Dorsolateral prefrontal cortex (tissue), 120 donors: ENCODE measurements at regions of chr7 and their contacts with region 1.

Region 1: DNA sequence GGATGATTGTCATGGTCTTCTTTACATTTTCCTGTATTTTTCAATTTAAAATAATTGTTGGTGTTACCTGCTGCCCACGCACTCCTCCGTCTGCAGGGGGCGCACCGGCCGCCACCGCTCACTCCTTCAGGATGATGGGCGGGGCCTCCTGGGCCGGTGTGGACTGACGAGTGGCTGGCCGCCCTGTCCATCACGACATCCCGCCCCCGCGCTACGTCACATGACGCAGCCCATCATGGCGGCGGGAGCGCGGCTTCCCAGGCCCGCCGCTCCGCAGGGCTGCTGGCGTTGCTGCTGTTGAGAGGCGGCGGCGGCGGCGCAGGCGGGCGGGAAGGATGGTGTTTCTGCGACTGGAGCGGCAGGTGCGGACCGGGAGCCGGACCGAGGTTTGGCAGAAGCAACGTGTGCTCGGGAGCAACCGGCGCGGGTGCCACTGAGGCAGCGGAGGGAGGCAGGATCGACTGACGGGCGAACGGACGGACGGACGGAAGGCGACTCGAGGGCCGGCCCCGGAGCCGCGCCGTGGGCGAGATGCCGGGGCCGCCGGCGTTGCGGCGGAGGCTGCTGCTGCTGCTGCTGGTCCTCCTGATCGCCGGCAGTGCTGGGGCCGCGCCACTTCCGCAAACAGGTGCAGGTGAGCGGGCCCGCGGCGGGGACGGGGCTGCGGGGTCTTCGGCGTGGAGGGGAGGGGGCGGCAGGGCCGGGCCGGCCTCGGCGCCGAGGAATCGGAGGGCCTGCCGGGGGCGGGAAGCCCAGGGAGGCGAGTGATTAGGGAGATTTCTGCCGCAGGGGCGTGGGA is at the start of gene LMTK2:
- DNase-seq: peak; percentile 95 to 97 (median 96)
- H3K4me3 ChIP-seq: peak within 1 kb of the TSS; percentile 53 to 99 (median 95)
- H3K27ac ChIP-seq: peak within 1 kb of the TSS in 57 of 59 donors; percentile 41 to 95 (median 83)
- H3K27me3 ChIP-seq: no peaks in the 10 kb centered on the region
- CTCF ChIP-seq: peak; percentile 92 to 100 (median 98)
- total RNA-seq, gene LMTK2: 47.8 to 154 (median 104) TPM

Region 2: DNA sequence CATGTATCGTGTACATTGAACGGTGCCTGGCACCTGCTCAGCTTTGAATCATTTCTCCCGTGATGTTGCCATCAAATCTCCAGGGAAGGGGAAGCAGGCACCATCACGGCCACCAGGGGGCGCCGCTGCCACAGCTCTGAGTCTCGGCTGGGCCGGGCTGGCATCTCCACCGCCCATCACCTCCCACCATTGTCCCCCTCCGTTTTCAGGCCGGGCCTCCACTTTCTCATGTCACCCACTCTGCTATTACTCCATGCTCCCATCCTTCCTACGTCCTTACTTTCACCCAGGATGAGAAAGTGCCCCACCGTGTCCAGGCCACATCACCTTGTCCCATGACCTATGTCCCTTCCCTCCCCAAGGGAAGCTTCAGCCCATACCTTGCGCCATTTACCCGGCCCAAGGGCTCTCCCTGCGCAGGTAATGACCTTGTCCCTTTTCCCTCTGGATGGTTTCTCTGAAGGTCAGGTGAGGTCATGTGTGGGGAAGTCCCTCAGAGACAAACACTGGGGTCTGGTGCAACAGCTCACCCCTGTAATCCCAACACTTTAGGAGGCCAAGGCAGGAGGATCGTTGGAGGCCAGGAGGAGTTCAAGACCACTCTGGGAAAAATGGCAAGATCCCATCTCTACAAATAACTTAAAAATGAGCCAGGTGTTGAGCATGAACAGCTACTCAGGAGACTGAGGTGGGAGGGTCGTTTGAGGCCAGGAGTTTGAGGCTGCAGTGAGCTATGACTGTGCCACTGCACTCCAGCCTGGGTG is 85.1 kb before region 1 on chr7:
- intact Hi-C with region 1: loop called (anchors 5 kb)
- DNase-seq: peak; percentile 77 to 89 (median 87)
- H3K4me3 ChIP-seq: no peak overlapping the region
- H3K27ac ChIP-seq: no peak overlapping the region
- H3K27me3 ChIP-seq: peaks cover 0 to 4% (median 0%) of the 10 kb centered on the region in 45 donors
- CTCF ChIP-seq: peak; percentile 92 to 100 (median 97)

Region 3: DNA sequence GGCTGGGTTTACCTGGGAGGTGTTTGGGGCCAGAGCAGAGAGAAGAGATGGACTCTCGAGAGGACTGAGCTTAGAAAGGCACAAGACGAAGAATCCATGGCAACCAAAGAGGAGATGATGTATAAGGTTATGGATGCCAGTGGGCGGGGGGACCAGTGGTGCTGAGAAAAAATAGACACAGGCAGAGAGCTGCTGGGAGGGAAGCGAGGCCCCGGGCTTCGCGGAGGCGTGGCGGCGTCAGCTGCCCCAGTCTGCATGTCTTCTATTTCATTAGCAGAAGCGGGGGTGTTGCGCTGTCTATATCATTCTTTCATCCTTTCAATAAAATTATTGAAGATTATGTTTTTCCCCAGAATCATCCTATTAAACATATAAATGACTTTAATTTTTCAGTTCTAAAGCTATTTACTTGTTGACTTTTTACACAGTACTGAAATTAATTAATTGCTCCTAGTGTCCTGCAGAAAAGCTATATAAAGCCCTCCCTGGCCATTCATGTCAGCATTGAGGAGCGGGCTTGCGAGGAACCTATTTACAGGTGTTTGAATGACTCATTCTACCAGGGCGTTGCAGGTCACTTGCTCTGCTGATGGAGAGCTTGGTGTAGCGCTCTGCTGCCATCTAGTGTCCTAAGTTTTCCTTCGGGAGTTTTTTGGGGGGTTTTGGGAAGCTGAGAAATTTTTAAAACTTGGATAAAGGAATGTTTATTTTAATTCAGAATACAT is 61.5 kb after region 1 on chr7:
- intact Hi-C with region 1: loop called (anchors 2 to 5 kb)
- DNase-seq: peak in 9 of 10 donors; percentile 49 to 78 (median 65)
- H3K4me3 ChIP-seq: peak overlapping the region in 16 of 59 donors; percentile 3 to 40 (median 12)
- H3K27ac ChIP-seq: peak overlapping the region in 38 of 59 donors; percentile 5 to 79 (median 52)
- H3K27me3 ChIP-seq: no peaks in the 10 kb centered on the region
- CTCF ChIP-seq: peak; percentile 60 to 95 (median 83)

Region 4: DNA sequence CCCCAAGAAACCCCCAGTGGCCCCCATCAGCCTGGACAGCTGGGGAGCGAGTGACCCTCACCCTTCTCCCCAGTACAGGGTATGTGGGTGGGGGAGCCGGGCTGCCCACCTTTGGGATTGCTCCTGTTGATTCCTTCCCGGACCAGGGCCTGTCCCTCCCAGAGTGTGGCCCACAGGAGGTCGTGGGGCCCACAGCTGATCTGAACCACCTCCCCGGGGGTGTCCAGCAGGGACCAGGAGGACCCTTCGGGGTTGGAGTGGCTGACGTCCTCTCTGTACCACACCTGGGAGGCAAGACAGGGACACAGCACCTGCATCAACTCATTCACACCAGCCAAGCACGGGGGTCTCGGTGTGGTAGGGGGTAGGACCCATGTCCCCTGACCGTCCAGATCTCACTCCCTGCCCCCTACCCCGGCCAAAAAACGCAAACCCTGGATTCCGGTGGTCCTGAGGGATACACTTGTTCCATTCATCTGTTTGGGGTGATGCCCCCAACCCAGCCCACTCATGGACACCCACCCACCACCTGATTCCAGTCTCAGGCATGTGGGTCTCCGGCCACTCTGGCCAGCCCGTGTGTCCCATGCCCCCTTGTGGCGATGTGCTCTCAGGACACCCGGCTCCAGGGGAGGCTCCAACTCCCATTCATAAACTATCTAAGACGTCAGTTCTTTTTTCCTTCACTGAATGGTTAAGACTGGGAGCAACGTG is 134.3 kb after region 1 on chr7:
- intact Hi-C with region 1: loop called in 1 of 2 experiments (anchors 10 kb)
- DNase-seq: peak in 7 of 10 donors; percentile 24 to 65 (median 50)
- H3K4me3 ChIP-seq: no peak overlapping the region
- H3K27ac ChIP-seq: peak overlapping the region in 1 of 59 donors; percentile 15
- H3K27me3 ChIP-seq: no peaks in the 10 kb centered on the region
- CTCF ChIP-seq: peak; percentile 34 to 82 (median 72)

Region 5: GRCh38 chr7:98251841-98252639 is 145.2 kb after region 1 on chr7 and contains the start of gene TECPR1:
- intact Hi-C with region 1: loop called (anchors 10 kb)
- DNase-seq: peak; percentile 94 to 99 (median 96)
- H3K4me3 ChIP-seq: peak within 1 kb of the TSS; percentile 67 to 100 (median 96)
- H3K27ac ChIP-seq: peak within 1 kb of the TSS in 45 of 59 donors; percentile 23 to 92 (median 71)
- H3K27me3 ChIP-seq: no peaks in the 10 kb centered on the region
- CTCF ChIP-seq: peak in 13 of 56 donors; percentile 7 to 46 (median 16)
- total RNA-seq, gene TECPR1: 51.1 to 113 (median 76.1) TPM